ENCODE measurements at regions of chr19 and their contacts with region 1.

Region 1: GRCh38 chr19:18007044-18007916 is 690 bp upstream of the ARRDC2 start:
- DNase-seq: peak; percentile 82
- ATAC-seq: peak; percentile 74
- H3K4me3 Mint-ChIP-seq: peak overlapping the region; percentile 74
- H3K27ac Mint-ChIP-seq: peak overlapping the region; percentile 68
- H3K4me1 Mint-ChIP-seq: peaks cover 39% of the 10 kb centered on the region
- H3K27me3 Mint-ChIP-seq: no peaks in the 10 kb centered on the region

Region 2: GRCh38 chr19:18021121-18021755 is 14.0 kb after region 1 on chr19:
- CTCF ChIA-PET with region 1: interaction called, 15 read pairs
- POLR2A ChIA-PET with region 1: interaction called, 5 read pairs
- DNase-seq: peak; percentile 47
- ATAC-seq: no peak
- H3K4me3 Mint-ChIP-seq: peak overlapping the region; percentile 56
- H3K27ac Mint-ChIP-seq: peak overlapping the region; percentile 84
- H3K4me1 Mint-ChIP-seq: peaks cover 67% of the 10 kb centered on the region
- H3K27me3 Mint-ChIP-seq: no peaks in the 10 kb centered on the region